K562 (cell line): ENCODE measurements at regions of chr2 and their contacts with region 1.

Region 1: GRCh38 chr2:233323851-233324250 is 16.2 kb downstream of the SAG start:
- DNase-seq: no peak
- ATAC-seq: peak; percentile 78
- H3K4me3 ChIP-seq: no peak overlapping the region
- H3K27ac ChIP-seq: no peak overlapping the region
- H3K4me1 ChIP-seq: no peaks in the 10 kb centered on the region; a peak in 1 of 5 replicates
- H3K27me3 ChIP-seq: peaks cover 0 to 26% of the 10 kb centered on the region in 2 experiments; a peak in 2 of 5 replicates
- CTCF ChIP-seq: peak; percentile 29 to 39 (median 38); a peak in 3 of 6 replicates
- EP300 ChIP-seq: no peak
- POLR2A ChIP-seq: no peak
- RAD21 ChIP-seq: peak in 1 of 2 experiments; percentile 50; a peak in 2 of 4 replicates

Region 2: GRCh38 chr2:233385489-233386044 is 61.7 kb after region 1 on chr2:
- CTCF ChIA-PET with region 1: no interaction called
- POLR2A ChIA-PET with region 1: no interaction called
- in situ Hi-C with region 1: no loop called
- intact Hi-C with region 1: loop called (anchors 2 kb)
- DNase-seq: peak in 1 of 4 experiments; percentile 33
- ATAC-seq: no peak; the same call in 2 of the 3 replicates
- H3K4me3 ChIP-seq: no peak overlapping the region
- H3K27ac ChIP-seq: no peak overlapping the region
- H3K4me1 ChIP-seq: peaks cover 0 to 10% of the 10 kb centered on the region in 2 experiments; a peak in 4 of 5 replicates
- H3K27me3 ChIP-seq: no peaks in the 10 kb centered on the region
- CTCF ChIP-seq: no peak
- EP300 ChIP-seq: no peak
- POLR2A ChIP-seq: no peak
- RAD21 ChIP-seq: no peak